ENCODE measurements at regions of chr2 and their contacts with region 1.

Region 1: DNA sequence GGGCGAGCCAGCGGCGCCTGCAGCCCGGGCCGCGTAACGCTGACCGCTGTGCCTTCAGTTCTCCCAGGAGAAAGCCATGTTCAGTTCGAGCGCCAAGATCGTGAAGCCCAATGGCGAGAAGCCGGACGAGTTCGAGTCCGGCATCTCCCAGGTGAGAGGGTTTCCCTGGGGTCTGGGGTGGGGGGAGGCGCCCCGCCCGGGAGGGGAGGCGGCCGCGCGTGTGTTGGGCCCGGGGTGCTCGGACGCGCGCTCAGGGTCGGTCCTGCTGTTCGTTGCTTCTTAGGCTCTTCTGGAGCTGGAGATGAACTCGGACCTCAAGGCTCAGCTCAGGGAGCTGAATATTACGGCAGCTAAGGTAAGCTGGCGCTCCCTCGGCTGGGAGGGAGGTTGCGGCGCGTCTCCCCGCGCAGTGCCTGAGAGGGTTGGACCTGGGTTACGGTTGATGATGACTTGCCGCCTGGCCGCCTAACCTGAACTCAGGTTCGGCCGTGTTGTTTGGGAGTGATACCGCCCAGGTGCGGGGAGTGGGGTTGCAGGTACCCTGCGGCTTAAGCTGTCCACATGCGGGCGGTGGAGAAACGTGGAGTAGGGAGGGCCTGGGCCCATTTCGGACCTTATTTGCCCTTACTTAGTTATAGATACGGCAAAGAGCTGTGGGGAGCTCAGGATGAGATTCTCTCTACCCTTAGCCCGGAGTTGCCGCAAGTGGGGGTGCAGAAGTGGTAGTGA is 638 bp downstream of the RPS7 start:
- DNase-seq: peak; percentile 42
- H3K4me3 Mint-ChIP-seq: peak overlapping the region; percentile 98
- H3K27ac Mint-ChIP-seq: peak overlapping the region; percentile 93
- H3K4me1 Mint-ChIP-seq: peaks cover 44% of the 10 kb centered on the region
- H3K27me3 Mint-ChIP-seq: no peaks in the 10 kb centered on the region

Region 2: DNA sequence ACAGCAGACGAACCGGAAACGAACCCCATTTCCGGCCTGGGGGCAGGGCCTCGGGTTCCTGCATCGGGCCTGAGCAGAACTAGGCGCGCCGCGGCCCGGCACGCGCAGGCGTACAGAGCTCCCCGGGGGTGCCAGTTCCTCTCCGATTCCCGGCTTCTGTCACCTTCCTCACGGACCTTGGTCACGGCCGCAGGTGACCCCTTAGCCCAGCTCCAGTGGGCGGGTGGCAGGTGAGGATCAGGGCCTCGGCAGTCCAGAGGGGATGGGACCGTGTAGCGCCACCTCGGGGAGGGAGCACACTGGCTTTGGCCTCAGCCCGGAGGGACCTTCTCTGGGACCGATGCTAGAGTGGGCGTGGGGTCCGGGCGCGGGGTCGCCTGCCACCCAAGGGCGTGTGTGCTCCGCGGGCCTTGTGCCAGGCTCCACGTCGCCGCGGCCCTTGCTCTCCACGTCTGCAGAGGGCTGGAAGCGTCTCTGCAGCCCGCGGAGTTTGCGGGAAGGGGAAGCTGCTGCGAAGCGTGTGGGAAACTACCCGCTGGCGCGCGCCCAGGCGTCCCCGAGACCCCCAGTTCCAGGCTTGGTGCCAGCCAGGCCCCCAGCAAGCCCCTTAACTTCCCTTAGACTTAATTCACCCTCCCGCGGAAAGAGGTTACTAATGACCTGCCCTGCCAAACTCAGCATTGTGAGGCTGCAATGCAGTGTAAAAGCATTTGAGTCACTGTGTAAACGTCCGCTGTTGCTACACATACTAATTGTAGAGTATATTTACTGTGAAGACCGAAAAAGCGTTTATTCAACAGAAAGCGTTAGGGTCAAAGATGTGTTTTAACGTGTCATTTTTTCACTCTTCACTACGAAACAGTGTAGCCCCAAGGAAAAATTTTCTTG is 195.8 kb before region 1 on chr2 and contains the start of gene TRAPPC12:
- CTCF ChIA-PET with region 1: no interaction called
- POLR2A ChIA-PET with region 1: no interaction called
- intact Hi-C with region 1: loop called (anchors 1 kb)
- DNase-seq: peak; percentile 95
- H3K4me3 Mint-ChIP-seq: peak within 1 kb of the TSS; percentile 98
- H3K27ac Mint-ChIP-seq: peak within 1 kb of the TSS; percentile 97
- H3K4me1 Mint-ChIP-seq: peaks cover 39% of the 10 kb centered on the region
- H3K27me3 Mint-ChIP-seq: no peaks in the 10 kb centered on the region
- total RNA-seq, gene TRAPPC12: 61.4 to 64.3 TPM

Region 3: DNA sequence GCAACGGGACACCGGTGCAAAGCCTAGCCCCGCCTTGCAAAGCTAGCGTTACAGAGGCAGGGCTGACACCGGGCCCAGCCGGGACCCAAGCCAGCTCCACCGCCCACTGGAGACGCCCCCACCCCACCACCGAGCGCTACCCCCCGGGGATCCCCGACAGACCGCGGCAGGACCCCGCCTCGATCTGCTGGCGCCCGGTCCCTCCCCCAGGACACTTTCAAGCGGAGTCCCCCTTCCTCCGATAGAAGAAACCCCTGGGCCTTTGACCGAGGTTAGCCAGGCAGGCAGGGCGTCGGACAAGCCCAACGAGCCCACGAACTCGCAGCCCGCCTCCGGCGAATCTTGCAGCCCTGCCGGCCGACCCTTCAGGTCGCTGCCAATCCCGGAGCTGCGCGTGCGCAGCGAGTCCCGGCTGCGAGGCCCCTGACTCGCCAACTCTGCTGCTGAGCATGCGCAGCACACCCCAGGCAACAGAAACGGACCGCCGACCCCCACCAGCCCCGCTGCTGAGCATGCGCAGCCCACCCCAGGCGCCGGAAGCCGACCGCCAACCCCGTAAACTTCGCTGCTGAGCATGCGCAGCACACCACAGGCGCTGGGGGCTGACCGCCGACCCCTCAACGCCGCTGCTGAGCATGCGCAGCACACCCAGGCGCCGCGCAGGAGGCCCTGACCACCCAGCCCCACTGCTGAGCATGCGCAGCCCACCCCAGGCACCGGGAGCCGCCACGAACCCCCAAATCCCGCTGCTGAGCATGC is 57.0 kb before region 1 on chr2:
- CTCF ChIA-PET with region 1: interaction called, 3 read pairs
- POLR2A ChIA-PET with region 1: interaction called, 5 read pairs
- intact Hi-C with region 1: loop called (anchors 1 kb)
- DNase-seq: peak; percentile 99
- H3K4me3 Mint-ChIP-seq: peak overlapping the region; percentile 84
- H3K27ac Mint-ChIP-seq: peak overlapping the region; percentile 89
- H3K4me1 Mint-ChIP-seq: peaks cover 38% of the 10 kb centered on the region
- H3K27me3 Mint-ChIP-seq: no peaks in the 10 kb centered on the region

Region 4: DNA sequence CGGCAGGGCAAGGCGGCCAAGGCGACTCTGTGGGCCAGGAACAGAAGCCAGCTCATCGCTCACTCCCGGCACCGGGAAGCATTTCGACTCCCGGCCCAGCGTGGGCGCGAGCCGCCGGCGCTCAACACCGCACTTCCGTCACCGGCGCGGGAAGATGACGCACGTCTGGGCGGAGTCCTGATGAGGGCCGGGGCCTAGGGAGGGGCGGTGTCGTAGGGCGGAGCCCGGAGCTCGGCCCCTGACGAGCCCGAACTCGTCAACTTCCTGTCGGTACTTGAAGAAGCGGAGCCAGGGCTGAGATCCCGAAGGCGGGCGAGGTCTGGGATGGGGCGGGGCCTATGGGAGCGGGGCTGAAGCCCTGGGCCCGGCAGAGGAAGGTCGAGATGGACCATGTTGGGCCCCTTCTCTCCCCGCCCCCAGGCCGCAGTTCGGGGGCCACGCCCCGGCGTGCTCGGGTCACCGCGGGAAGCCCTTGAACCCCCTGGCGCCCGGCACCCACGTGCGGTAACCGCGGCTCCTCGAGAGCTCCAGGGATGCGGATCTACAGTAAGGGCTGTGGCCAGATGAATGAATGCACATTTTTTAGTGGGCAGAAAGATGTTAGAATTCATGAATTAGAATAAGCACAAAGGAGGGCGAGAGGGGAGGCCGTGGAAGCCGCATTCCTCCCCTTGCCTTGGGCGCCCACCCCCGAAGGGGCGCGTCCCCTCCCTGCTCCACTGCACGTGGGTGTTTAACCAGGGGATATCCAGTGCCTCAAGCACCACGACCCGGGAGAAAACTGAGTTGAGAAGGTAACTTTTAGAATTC is 17.3 kb before region 1 on chr2 and contains the start of gene RNASEH1:
- CTCF ChIA-PET with region 1: interaction called, 6 read pairs
- POLR2A ChIA-PET with region 1: interaction called, 61 read pairs
- intact Hi-C with region 1: loop called (anchors 1 kb)
- DNase-seq: peak; percentile 99
- H3K4me3 Mint-ChIP-seq: peak within 1 kb of the TSS; percentile 86
- H3K27ac Mint-ChIP-seq: peak within 1 kb of the TSS; percentile 93
- H3K4me1 Mint-ChIP-seq: peaks cover 30% of the 10 kb centered on the region
- H3K27me3 Mint-ChIP-seq: no peaks in the 10 kb centered on the region
- total RNA-seq, gene RNASEH1: 23.6 to 24.8 TPM

Region 5: DNA sequence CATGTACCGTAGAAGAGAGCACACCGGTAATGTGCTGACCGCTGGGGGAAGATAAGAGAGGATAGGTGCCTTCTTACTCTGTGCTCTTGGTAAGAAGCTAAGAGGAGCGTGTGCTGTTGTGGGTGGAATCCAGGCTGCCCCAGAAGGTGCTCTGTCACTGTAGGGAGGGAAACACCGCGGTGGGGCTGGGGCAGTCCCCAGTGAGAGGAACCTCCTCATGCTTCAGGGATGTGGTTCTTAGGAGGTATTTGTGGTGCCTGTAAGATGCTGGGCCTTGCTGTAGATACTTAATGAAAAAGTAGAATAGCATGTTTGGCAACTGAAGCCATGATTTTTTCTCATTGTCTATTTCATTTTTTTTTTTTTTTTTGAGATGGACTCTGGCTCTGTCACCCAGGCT is 20.3 kb after region 1 on chr2:
- CTCF ChIA-PET with region 1: no interaction called
- POLR2A ChIA-PET with region 1: no interaction called
- intact Hi-C with region 1: loop called (anchors 2 kb)
- DNase-seq: peak; percentile 73
- H3K4me3 Mint-ChIP-seq: no peak overlapping the region
- H3K27ac Mint-ChIP-seq: no peak overlapping the region
- H3K4me1 Mint-ChIP-seq: peaks cover 16% of the 10 kb centered on the region
- H3K27me3 Mint-ChIP-seq: peaks cover 2% of the 10 kb centered on the region

Measured in activated CD4-positive, alpha-beta memory T cell treated with anti-CD3 and anti-CD28 coated beads for 36 hours (primary cell).